ENCODE measurements at regions of chr12 and their contacts with region 1.

Region 1: DNA sequence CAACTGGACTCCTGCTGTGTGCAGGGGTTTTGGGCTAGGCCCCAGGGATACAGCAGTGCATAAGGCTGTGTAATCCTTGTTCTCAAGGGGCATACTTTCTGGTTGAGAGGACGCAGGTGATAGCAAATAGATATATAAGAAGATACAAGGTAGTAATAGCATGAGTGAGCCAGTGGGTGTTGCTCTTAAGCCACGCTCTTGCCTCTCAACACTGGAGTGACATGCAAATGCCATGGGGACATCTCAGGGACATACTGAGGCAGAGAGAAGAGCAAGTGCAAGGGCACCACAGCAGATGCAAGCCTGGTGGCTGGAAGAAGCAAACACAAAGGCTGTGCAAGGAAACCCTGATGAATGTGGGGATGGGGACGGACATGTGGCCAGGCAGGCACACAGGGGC is 223.3 kb downstream of the CHST11 start:
- DNase-seq: no peak
- ATAC-seq: peak; percentile 64
- H3K4me3 Mint-ChIP-seq: no peak overlapping the region
- H3K27ac Mint-ChIP-seq: no peak overlapping the region
- H3K4me1 Mint-ChIP-seq: peaks cover 88% of the 10 kb centered on the region
- H3K27me3 Mint-ChIP-seq: no peaks in the 10 kb centered on the region
- CTCF ChIP-seq: no peak

Region 2: DNA sequence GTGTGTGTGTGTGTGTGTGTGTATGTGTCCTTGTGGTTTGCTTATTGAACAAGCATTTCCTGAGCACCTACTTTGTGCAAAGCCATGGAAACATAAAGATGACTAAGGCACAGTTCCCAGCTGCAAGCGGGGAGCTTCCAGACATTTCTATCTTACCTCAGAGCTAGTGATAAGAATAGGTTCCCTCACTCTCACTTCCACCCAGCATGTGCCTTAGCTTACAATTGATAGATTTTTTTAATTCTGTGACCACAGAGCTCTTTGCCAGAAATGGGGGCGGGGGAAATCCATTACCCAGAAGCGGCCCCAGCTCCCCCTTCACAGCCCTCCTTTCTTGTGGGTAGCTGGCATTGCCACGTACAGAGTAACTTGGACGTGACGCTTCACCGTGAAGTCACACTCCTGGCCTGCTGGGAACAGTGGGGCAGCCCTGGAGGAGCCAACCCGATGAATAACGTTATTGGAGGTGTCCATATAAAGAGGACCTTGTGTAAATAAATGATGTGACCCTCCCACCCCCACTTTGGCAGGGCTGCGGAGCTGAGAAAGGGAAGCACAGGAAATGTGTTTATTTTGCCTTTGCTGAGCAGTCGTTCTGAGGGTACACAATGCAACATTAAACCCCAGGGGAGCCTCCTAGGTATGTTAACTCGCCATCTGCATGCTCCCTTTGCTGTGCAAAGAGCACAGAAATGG is 15.5 kb after region 1 on chr12:
- CTCF ChIA-PET with region 1: interaction called, 3 read pairs
- POLR2A ChIA-PET with region 1: interaction called, 9 read pairs
- intact Hi-C with region 1: loop called (anchors 1 kb)
- DNase-seq: peak; percentile 49
- ATAC-seq: peak; percentile 71
- H3K4me3 Mint-ChIP-seq: peak overlapping the region; percentile 57
- H3K27ac Mint-ChIP-seq: peak overlapping the region; percentile 81
- H3K4me1 Mint-ChIP-seq: peaks cover 84% of the 10 kb centered on the region
- H3K27me3 Mint-ChIP-seq: no peaks in the 10 kb centered on the region
- CTCF ChIP-seq: no peak

Region 3: DNA sequence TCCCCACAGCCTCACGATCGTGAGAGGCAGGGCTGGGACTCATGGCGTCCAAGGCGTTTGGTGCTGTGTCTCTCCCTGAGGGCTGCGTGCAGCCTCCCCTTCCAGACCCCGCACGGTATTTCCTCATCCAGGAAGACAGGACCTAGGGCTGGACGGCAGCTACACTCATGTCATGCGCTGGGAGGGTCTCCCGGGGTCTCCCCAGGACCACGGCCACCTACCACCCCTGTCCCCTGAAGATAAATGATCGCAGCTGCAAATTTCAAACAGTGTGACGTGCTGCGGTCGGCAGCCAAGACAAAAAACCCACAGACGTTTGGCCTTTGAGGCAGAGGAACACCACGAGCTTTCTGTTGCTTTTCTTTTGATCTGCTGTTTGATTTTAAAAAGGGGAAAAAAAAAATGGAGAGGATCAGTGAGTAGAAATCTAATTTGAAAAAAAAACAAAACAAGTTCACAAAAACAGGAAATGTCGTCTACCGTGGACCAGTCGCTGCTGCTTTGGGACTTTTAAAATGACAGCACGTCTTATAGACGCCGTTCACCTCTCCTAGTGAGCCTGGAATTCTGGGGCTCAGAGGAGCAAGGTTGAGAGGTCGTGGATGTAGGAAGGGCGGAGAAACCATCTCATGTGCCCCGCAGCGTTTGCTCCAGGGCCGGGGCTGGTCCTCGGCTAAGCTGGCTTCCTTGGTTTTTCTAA is 40.4 kb after region 1 on chr12:
- CTCF ChIA-PET with region 1: no interaction called
- POLR2A ChIA-PET with region 1: interaction called, 4 read pairs
- intact Hi-C with region 1: loop called (anchors 5 kb)
- DNase-seq: peak; percentile 27
- ATAC-seq: peak; percentile 57
- H3K4me3 Mint-ChIP-seq: peak overlapping the region; percentile 75
- H3K27ac Mint-ChIP-seq: peak overlapping the region; percentile 77
- H3K4me1 Mint-ChIP-seq: peaks cover 62% of the 10 kb centered on the region
- H3K27me3 Mint-ChIP-seq: no peaks in the 10 kb centered on the region
- CTCF ChIP-seq: no peak

Region 4: DNA sequence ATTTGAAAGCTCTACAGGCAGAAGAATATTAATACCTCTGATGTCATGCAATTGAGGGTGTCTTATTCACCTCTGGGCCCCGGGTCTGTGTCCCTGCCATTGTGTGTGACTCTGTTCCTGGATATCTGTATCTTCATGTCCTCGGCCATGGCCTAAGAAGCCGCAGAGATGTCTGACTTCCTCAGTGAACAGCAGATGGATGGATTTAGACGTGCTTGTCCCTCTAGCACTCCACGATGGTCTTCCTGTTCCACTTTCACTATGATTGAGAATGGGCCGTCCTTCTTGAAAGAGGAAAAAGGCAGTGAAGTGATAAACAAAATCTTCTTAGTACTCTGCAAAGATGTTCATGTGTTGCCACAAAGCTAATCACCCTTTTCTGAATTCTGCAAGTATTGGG is 60.6 kb after region 1 on chr12:
- CTCF ChIA-PET with region 1: no interaction called
- POLR2A ChIA-PET with region 1: interaction called, 12 read pairs
- intact Hi-C with region 1: loop called (anchors 5 kb)
- DNase-seq: peak; percentile 30
- ATAC-seq: peak; percentile 90
- H3K4me3 Mint-ChIP-seq: peak overlapping the region; percentile 72
- H3K27ac Mint-ChIP-seq: peak overlapping the region; percentile 93
- H3K4me1 Mint-ChIP-seq: peaks cover 97% of the 10 kb centered on the region
- H3K27me3 Mint-ChIP-seq: no peaks in the 10 kb centered on the region
- CTCF ChIP-seq: no peak

Region 5: DNA sequence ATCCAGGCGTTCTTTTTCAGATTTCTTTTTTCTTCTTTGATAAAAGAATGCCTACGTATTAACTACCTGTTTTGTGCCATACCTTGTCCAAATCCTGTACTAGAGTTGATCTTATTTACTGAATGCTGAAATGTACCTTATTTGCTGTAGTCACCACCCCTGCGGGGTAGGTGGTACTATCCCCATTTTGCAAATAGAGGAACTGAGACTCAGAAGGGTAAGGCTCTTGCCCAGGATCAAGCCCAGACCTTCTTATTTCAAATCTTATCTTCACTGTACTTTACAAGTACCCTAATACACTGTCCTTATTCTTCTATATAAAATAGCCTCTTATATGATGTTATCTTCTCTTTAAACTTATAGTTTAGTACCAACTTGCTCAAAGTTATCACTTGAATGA is 71.5 kb after region 1 on chr12:
- CTCF ChIA-PET with region 1: no interaction called
- POLR2A ChIA-PET with region 1: no interaction called
- intact Hi-C with region 1: no loop called
- DNase-seq: no peak
- ATAC-seq: peak; percentile 90
- H3K4me3 Mint-ChIP-seq: peak overlapping the region; percentile 46
- H3K27ac Mint-ChIP-seq: peak overlapping the region; percentile 77
- H3K4me1 Mint-ChIP-seq: peaks cover 54% of the 10 kb centered on the region
- H3K27me3 Mint-ChIP-seq: no peaks in the 10 kb centered on the region
- CTCF ChIP-seq: no peak

Region 6: DNA sequence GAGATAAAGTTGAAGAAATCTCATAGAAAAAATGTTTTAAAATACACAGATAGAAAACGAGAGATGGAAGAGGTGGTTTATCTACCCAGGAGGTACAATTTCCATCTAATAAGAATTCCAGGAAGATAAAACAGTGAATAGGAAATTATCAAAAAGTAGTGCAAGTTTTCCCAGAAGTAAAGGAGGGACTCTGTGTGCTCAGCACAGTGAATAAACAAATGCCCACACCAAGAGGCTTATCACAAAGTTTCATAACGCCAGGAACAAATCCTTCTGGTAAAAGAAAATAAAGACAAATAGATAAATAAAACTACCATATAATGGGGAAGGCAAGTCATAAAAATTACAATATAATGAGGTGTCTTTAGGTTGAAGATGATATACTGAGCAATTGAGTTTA is 99.1 kb after region 1 on chr12:
- CTCF ChIA-PET with region 1: no interaction called
- POLR2A ChIA-PET with region 1: no interaction called
- intact Hi-C with region 1: no loop called
- DNase-seq: no peak
- ATAC-seq: no peak
- H3K4me3 Mint-ChIP-seq: no peak overlapping the region
- H3K27ac Mint-ChIP-seq: no peak overlapping the region
- H3K4me1 Mint-ChIP-seq: no peaks in the 10 kb centered on the region
- H3K27me3 Mint-ChIP-seq: peaks cover 3% of the 10 kb centered on the region
- CTCF ChIP-seq: no peak

Region 7: GRCh38 chr12:104790296-104791125 is 110.4 kb after region 1 on chr12:
- CTCF ChIA-PET with region 1: no interaction called
- POLR2A ChIA-PET with region 1: no interaction called
- intact Hi-C with region 1: loop called (anchors 5 kb)
- DNase-seq: peak; percentile 40
- ATAC-seq: peak; percentile 76
- H3K4me3 Mint-ChIP-seq: peak overlapping the region; percentile 76
- H3K27ac Mint-ChIP-seq: no peak overlapping the region
- H3K4me1 Mint-ChIP-seq: peaks cover 7% of the 10 kb centered on the region
- H3K27me3 Mint-ChIP-seq: no peaks in the 10 kb centered on the region
- CTCF ChIP-seq: peak; percentile 21

Region 8: GRCh38 chr12:104877123-104877705 is 197.1 kb after region 1 on chr12:
- CTCF ChIA-PET with region 1: no interaction called
- POLR2A ChIA-PET with region 1: no interaction called
- intact Hi-C with region 1: loop called (anchors 1 kb)
- DNase-seq: no peak
- ATAC-seq: no peak
- H3K4me3 Mint-ChIP-seq: no peak overlapping the region
- H3K27ac Mint-ChIP-seq: no peak overlapping the region
- H3K4me1 Mint-ChIP-seq: no peaks in the 10 kb centered on the region
- H3K27me3 Mint-ChIP-seq: peaks cover 3% of the 10 kb centered on the region
- CTCF ChIP-seq: no peak